Caco-2 (cell line): ENCODE measurements at regions of chr10 and their contacts with region 1.

Region 1: DNA sequence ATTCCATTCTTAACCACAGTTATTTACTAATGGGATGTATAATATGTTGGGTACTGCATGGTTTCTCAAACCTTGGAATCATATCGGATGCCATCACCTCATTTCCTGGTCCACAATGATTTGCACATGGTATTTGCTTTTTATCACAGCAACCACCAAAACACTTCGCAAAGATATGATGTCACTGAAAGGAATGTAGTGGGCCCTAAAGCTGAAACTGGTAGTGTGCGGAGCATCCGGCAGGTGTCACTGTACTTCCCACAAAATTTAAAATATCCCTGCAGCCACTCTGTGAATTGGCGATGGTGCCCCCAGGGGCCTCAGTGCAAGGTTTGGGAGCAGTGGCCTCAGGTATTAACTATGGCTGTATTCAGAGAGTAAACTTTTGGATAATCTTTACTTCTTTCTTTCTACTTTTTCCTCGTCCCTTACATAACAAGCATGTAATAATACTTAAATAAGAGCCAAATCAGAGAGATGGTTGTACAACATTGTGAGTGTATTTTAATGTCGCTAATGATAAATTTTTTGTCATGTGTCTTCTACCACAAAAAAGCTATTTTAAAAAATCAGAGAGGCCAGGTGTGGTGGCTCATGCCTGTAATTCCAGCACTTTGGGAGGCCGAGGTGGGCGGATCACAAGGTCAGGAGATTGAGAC is 66.2 kb downstream of the FAM241B start:
- DNase-seq: peak in 1 of 2 experiments; percentile 80
- H3K4me3 ChIP-seq: no peak overlapping the region
- H3K4me3 Mint-ChIP-seq: no peak overlapping the region
- H3K27ac Mint-ChIP-seq: peak overlapping the region; percentile 69
- H3K4me1 ChIP-seq: no peaks in the 10 kb centered on the region
- H3K4me1 Mint-ChIP-seq: no peaks in the 10 kb centered on the region
- H3K27me3 ChIP-seq: no peaks in the 10 kb centered on the region; the same call in 1 of the 2 replicates
- H3K27me3 Mint-ChIP-seq: peaks cover 23% of the 10 kb centered on the region
- CTCF ChIP-seq: peak; percentile 68 to 85

Region 2: GRCh38 chr10:69612760-69613159 is 83.4 kb before region 1 on chr10:
- CTCF ChIA-PET with region 1: no interaction called
- POLR2A ChIA-PET with region 1: no interaction called
- intact Hi-C with region 1: no loop called
- DNase-seq: no peak
- H3K4me3 ChIP-seq: no peak overlapping the region
- H3K4me3 Mint-ChIP-seq: no peak overlapping the region
- H3K27ac Mint-ChIP-seq: no peak overlapping the region
- H3K4me1 ChIP-seq: no peaks in the 10 kb centered on the region
- H3K4me1 Mint-ChIP-seq: no peaks in the 10 kb centered on the region
- H3K27me3 ChIP-seq: peaks cover 2% of the 10 kb centered on the region; the same call in 1 of the 2 replicates
- H3K27me3 Mint-ChIP-seq: peaks cover 17% of the 10 kb centered on the region
- CTCF ChIP-seq: no peak

Region 3: DNA sequence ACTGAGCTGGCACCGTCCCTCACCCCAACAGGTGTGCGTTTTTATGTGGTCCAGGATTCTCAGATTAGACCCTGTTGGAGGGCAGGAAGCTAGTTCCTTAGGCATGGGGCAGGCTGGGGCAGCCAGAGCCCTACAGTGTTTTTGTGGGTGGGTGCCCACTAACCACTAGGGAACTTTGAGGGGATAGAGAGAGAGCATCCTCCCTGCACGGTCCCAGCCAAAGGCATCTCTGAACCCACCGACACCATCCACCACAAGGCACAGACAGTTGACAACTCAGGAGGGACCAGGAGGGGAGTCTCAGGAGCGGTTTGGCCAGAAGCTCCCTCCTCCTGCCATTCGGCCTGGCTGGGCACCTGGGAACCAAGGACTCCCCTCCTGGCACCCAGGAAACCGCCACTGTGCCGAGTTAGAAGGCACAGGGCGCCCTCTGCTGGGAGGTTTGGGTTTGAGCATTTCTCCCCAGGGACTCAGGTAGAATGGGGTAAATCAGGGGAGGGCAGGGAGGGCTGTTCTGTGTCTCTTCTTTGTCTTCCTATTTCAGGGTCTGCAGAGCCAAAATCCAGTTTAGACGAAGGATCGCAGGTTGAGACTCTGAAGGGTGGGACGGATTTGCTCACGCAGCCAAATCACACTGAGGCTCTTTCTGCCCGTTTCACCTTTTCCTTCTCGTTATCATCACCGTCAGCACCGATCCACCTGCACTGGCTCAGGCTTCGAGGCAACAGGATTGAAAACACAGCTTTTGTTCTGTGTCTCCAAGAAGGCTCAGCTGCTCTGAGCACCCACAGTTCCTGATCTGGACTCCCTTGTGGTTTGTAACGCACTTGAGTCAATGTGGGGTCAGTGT is 20.7 kb after region 1 on chr10:
- CTCF ChIA-PET with region 1: interaction called, 8 read pairs
- POLR2A ChIA-PET with region 1: no interaction called
- intact Hi-C with region 1: loop called (anchors 1 kb)
- DNase-seq: peak; percentile 73 to 86
- H3K4me3 ChIP-seq: no peak overlapping the region
- H3K4me3 Mint-ChIP-seq: no peak overlapping the region
- H3K27ac Mint-ChIP-seq: no peak overlapping the region
- H3K4me1 ChIP-seq: no peaks in the 10 kb centered on the region
- H3K4me1 Mint-ChIP-seq: no peaks in the 10 kb centered on the region
- H3K27me3 ChIP-seq: no peaks in the 10 kb centered on the region
- H3K27me3 Mint-ChIP-seq: peaks cover 24% of the 10 kb centered on the region
- CTCF ChIP-seq: peak; percentile 94 to 99

Region 4: DNA sequence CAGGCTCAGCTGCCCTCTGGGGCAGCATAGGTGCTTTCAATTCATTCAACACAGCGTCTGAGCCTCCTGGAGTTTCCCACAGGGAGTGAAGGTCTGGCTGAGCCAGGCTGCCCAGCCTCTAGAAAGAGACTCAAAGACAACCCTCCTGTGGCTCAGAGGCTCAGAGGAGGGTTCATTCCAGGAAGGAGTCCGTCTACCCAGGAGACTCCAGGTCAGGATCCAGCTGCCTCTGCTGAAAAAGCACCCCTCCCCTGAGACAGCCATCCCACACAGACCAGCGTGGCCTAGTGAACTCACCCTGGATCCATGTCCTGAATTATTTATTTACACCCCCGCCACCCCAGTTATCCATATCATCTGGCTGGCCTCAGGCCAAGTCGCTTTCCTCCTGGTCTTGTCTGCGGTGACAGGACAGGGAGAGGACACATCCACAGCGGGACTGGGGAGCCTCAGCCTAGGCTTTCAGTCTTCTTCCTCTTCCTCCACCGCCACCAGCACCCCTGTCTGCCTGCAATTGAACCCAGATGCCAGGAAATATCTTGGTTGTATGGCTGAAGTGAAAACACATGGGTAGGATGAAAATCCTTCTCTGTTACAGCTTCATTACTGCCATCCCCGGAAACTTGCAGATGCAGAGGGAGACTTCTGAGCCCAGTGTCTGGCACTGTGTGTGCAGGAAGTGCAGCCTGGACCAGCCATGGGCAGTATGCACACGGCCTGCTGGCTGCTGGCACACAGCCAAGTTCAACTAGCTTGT is 61.5 kb after region 1 on chr10:
- CTCF ChIA-PET with region 1: no interaction called
- POLR2A ChIA-PET with region 1: no interaction called
- intact Hi-C with region 1: no loop called
- DNase-seq: no peak
- H3K4me3 ChIP-seq: no peak overlapping the region
- H3K4me3 Mint-ChIP-seq: no peak overlapping the region
- H3K27ac Mint-ChIP-seq: no peak overlapping the region
- H3K4me1 ChIP-seq: no peaks in the 10 kb centered on the region
- H3K4me1 Mint-ChIP-seq: no peaks in the 10 kb centered on the region
- H3K27me3 ChIP-seq: peaks cover 4% of the 10 kb centered on the region; the same call in 1 of the 2 replicates
- H3K27me3 Mint-ChIP-seq: peaks cover 30% of the 10 kb centered on the region
- CTCF ChIP-seq: no peak